Dendritic cell treated with granulocyte-macrophage colony-stimulating factor and Interleukin-4, amounts not matched to agents 40 ng/mL and 50 ng/mL, for 4 days (primary cell): ENCODE measurements at regions of chr13 and their contacts with region 1.

Region 1: GRCh38 chr13:69857183-69857821 is 250.3 kb upstream of the ATXN8OS start:
- H3K4me3 Mint-ChIP-seq: no peak overlapping the region
- H3K27ac Mint-ChIP-seq: no peak overlapping the region
- H3K4me1 Mint-ChIP-seq: no peaks in the 10 kb centered on the region
- H3K27me3 Mint-ChIP-seq: no peaks in the 10 kb centered on the region

Region 2: DNA sequence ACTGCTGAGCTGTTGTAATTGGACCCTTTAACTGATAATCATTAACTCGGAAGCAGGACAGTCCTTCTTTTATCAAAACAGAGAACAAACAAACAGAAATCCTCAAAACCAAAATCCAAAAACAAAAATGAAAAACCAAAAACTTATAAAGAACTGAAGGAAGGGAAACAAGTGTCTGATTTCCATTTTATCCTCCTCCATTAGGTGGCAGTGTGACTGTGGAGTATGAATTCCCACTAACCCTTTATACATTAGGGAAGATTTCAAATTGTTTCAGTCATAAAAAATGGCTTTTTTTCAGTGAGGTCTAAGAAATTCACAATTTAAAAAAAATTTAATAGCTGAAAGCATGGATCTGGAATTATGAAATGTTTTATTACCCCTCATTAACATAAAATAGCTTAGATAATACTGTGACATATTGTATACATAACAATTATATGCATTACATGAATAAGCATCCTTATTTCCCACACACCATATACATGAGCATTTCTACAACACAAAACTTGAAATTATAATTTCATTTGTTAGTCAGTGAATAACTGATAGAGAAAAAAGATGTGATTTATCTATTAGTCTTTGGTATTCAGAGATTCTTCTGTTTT is 1552.9 kb before region 1 on chr13:
- intact Hi-C with region 1: loop called (anchors 10 kb)
- H3K4me3 Mint-ChIP-seq: no peak overlapping the region
- H3K27ac Mint-ChIP-seq: no peak overlapping the region
- H3K4me1 Mint-ChIP-seq: no peaks in the 10 kb centered on the region
- H3K27me3 Mint-ChIP-seq: no peaks in the 10 kb centered on the region